ENCODE measurements at regions of chr20 and their contacts with region 1.

Region 1: DNA sequence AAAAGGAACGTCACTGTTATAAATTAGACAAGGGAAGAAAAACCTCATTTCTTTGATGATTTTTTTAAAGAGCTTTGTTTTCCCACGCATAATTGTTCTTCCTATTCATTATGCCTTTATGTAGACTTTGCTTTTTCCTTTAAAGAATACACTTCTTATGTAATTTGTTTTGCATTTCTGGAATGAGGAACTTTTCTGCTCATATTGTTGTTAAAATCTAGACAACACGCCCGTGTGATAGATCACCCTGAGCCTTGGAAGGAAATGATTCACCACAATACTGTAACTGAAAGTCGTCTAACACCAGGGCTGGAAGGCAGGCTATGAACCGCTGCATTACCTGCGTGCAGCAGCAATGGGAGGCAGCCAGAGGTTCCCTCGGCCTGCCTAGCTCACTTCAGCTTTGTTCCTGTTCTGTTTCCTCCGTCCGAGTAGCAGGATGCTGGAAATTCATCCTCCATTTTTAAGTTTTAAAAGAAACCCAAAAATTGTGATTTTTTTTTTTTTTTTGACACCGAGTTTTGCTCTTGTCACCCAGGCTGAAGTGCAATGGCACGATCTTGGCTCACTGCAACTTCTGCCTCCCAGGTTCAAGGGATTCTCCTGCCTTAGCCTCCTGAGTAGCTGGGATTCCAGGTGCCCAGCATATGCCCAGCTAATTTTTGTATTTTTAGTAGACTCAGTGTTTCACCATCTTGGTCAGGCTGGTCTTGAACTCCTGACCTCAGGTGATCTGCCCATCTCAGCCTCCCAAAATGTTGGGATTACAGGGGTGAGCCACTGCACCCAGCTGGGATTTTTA is 49.6 kb upstream of the ZNF217 start:
- DNase-seq: peak; percentile 91
- H3K4me3 Mint-ChIP-seq: peak overlapping the region; percentile 81
- H3K27ac Mint-ChIP-seq: peak overlapping the region; percentile 98
- H3K4me1 Mint-ChIP-seq: peaks cover 37% of the 10 kb centered on the region
- H3K27me3 Mint-ChIP-seq: no peaks in the 10 kb centered on the region

Region 2: GRCh38 chr20:53594068-53595017 is 48.9 kb before region 1 on chr20:
- intact Hi-C with region 1: loop called (anchors 2 kb)
- DNase-seq: peak; percentile 99
- H3K4me3 Mint-ChIP-seq: peak overlapping the region; percentile 86
- H3K27ac Mint-ChIP-seq: peak overlapping the region; percentile 93
- H3K4me1 Mint-ChIP-seq: peaks cover 45% of the 10 kb centered on the region
- H3K27me3 Mint-ChIP-seq: no peaks in the 10 kb centered on the region

Region 3: DNA sequence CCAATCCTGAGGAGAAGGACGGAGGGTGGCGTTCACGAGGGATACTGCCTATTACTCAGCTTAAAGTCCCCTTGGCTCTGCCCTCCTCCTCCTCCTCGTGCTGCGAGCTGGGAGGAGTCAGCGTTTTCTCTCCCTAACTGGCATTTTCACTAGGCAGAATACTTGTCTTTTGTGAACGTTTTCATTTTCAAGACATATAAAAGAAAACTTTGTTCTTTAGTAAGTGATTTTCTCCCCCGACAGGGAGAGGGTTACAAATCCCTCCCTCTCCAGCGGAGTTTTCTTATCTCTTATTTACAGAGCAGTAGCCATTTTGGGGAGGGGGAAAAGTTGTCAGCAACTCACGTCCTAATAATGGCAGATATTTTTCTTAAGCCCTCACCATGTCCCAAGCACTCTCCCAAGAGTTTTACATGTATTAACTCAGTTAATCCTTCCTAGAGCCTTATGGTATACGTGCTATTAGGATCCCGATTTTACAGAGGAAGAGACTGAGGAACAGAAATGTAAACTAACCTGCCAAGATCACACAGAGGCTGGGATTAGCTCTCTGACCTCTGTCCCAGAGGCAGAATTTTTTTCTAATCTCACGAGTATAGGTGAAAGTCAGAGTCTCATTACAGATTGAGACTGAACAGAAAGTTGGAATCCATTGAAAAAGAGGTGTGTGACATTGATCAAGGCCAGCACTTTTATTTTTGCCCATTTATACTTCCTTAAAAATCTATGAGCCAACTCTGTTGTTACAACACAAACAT is 19.6 kb before region 1 on chr20:
- intact Hi-C with region 1: loop called (anchors 1 kb)
- DNase-seq: peak; percentile 81
- H3K4me3 Mint-ChIP-seq: peak overlapping the region; percentile 81
- H3K27ac Mint-ChIP-seq: peak overlapping the region; percentile 98
- H3K4me1 Mint-ChIP-seq: peaks cover 36% of the 10 kb centered on the region
- H3K27me3 Mint-ChIP-seq: no peaks in the 10 kb centered on the region

Region 4: DNA sequence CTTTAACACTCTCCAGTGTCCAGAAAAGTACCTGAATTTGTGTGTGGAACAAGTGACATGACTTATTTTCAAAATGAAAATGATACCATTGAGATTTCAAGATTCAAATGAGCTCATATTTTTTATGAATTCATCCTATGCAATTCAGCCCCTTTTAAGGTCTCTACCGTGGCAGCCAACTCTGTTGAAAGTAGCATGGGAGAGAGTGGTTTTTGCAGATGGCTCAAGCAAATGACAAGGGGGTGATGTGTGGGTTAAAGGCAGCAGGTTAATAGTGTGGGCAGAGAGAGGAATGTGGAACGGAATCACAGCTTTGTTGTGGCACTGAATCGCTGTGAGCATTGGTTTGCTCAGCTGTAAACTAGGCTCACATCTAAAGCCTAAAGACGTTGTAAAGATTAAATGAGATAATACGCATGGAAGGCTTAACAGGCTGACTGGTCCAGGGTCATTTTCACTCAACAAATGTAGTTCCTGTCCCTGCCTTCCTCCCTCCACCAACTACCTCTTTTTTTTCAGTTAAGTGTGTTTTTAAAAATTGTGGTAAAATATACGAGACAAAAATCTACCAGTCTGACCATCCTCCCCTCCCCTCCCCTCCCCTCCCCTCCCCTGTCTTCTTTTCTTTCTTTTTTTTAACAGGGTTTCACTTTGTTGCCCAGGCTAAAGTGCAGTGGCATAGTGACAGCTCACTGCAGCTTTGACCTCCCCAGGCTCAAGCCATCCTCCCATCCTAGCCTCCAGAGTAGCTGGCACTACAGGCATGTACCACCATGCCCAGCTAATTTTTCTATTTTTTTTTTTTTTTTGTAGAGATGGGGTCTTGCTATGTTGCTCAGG is 65.1 kb after region 1 on chr20:
- intact Hi-C with region 1: no loop called
- DNase-seq: peak; percentile 84
- H3K4me3 Mint-ChIP-seq: peak overlapping the region; percentile 57
- H3K27ac Mint-ChIP-seq: peak overlapping the region; percentile 93
- H3K4me1 Mint-ChIP-seq: peaks cover 52% of the 10 kb centered on the region
- H3K27me3 Mint-ChIP-seq: no peaks in the 10 kb centered on the region

Region 5: GRCh38 chr20:53828682-53829254 is 185.5 kb after region 1 on chr20:
- intact Hi-C with region 1: loop called (anchors 5 kb)
- DNase-seq: no peak
- H3K4me3 Mint-ChIP-seq: peak overlapping the region; percentile 91
- H3K27ac Mint-ChIP-seq: peak overlapping the region; percentile 96
- H3K4me1 Mint-ChIP-seq: peaks cover 50% of the 10 kb centered on the region
- H3K27me3 Mint-ChIP-seq: no peaks in the 10 kb centered on the region

Region 6: DNA sequence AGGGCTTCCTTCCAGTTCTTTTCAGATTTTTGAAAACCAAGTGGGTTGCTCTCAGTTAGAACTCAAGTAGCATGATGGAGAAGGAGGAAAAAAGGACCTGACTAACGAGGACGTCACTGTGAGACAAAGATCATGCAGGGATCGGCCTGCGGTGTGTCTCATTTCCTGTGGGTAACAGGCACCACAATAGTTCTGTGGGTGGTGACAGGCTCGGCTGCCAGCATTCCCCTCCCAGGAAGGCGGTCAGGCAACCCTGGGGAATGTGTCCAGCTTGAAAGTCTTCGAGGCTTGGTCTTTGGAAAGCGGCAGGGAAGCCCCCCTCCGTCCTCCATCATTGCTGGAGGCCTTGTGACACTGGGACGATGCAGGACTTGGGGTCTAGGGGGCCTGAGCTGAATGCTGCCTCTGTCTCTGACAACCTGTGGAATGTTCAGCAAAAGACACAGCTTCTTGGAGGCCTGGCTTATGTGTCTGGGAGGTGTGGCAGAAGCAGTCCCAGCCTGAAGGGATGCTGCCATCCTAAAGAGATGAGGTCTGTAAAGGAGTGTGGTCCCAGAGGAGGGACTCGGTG is 306.2 kb after region 1 on chr20:
- intact Hi-C with region 1: loop called (anchors 5 kb)
- DNase-seq: peak; percentile 94
- H3K4me3 Mint-ChIP-seq: peak overlapping the region; percentile 80
- H3K27ac Mint-ChIP-seq: peak overlapping the region; percentile 90
- H3K4me1 Mint-ChIP-seq: peaks cover 34% of the 10 kb centered on the region
- H3K27me3 Mint-ChIP-seq: peaks cover 4% of the 10 kb centered on the region